ENCODE measurements at regions of chr19 and their contacts with region 1.

Region 1: GRCh38 chr19:4557971-4558941 is 1.2 kb downstream of the SEMA6B start:
- DNase-seq: no peak
- H3K4me3 ChIP-seq: peak overlapping the region; percentile 28 to 58 (median 40)
- H3K27ac ChIP-seq: no peak overlapping the region
- H3K4me1 ChIP-seq: no peaks in the 10 kb centered on the region
- H3K27me3 ChIP-seq: peaks cover 0 to 4% of the 10 kb centered on the region in 2 donors
- CTCF ChIP-seq: peak; percentile 96 to 99 (median 96)
- POLR2A ChIP-seq: no peak

Region 2: GRCh38 chr19:5561559-5561958 is 1003.3 kb after region 1 on chr19:
- intact Hi-C with region 1: loop called (anchors 10 kb)
- DNase-seq: no peak
- H3K4me3 ChIP-seq: no peak overlapping the region
- H3K27ac ChIP-seq: no peak overlapping the region
- H3K4me1 ChIP-seq: no peaks in the 10 kb centered on the region
- H3K27me3 ChIP-seq: peaks cover 0 to 4% of the 10 kb centered on the region in 2 donors
- CTCF ChIP-seq: no peak
- POLR2A ChIP-seq: no peak

Measured in breast epithelium (tissue), 4 donors.